Right cardiac atrium (tissue), 5 donors: ENCODE measurements at regions of chr4 and their contacts with region 1.

Region 1: DNA sequence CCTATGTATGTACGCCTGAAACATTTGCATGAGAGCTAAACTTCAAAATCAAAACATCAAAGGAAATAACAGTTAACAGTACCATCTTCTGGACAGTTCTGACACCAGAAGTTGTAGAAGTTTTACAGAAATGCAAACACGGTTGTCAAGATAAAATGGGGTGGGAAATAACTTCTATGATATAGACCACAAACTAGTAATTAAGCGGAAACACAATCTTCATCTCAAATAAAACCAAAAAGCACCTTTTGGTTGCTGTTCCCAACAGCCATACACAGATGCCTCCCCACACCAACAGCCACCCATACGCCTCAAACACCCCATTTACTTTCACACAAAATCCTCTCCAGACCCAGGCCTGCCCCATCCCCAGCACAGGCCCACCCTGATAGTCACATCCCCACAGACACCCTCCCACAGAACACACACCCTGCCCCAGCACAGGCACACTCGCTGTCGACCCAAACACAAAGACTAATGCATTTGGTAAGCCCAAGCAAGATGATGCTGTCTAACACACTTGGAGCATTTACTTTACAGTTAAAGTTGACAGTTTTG is 64.3 kb downstream of the TAPT1 start:
- DNase-seq: no peak
- ATAC-seq: no peak
- H3K4me3 ChIP-seq: no peak overlapping the region
- H3K27ac ChIP-seq: no peak overlapping the region
- H3K4me1 ChIP-seq: peaks cover 4% of the 10 kb centered on the region
- H3K27me3 ChIP-seq: no peaks in the 10 kb centered on the region

Region 2: GRCh38 chr4:15930314-15930713 is 231.6 kb before region 1 on chr4:
- intact Hi-C with region 1: no loop called
- DNase-seq: no peak
- ATAC-seq: peak in 1 of 2 donors; percentile 16
- H3K4me3 ChIP-seq: no peak overlapping the region
- H3K27ac ChIP-seq: no peak overlapping the region
- H3K4me1 ChIP-seq: no peaks in the 10 kb centered on the region
- H3K27me3 ChIP-seq: no peaks in the 10 kb centered on the region

Region 3: DNA sequence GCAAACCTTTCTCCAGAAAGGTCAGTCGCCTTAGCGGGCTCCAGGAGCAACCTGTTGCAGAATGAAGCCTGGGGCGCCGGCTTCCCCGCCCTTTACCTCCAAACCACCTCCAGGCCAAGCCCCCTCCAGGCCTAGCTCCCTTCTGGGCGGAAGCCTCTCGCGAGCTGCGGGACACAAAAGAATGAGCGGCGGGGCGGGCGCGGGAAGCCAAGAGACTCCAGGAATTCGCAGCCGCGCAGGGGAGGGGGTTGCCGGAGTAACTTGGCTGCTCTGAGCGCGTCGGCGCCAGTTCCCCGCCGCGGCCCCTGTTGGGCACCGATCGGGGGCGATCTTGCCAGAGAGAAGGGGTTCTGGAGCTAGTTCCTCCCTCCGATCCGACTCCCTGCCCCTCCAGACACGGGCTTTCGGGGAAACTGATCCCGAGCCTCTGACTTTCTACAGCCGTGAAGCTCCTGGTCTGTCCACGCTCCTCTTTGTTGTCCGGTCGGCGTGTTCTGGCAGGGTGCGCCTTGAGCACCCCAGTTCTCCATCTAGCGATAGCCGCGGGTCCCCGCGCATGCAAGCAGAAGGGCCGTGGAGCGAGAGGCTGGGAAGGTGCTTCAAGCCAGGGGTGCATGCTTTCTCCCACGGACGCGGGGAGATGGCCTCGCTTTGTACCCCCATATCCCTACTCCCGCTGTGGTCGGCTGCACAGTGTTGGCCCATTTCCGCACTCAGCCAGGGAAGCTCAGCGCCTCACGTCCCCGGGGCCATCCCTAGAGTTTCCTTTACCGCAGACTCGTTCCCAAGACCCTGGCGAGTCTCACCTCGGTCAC is 79.3 kb before region 1 on chr4:
- intact Hi-C with region 1: loop called in 1 of 4 experiments (anchors 10 kb)
- DNase-seq: peak in 2 of 3 donors; percentile 63 to 67
- ATAC-seq: peak; percentile 47 to 68
- H3K4me3 ChIP-seq: peak overlapping the region; percentile 79
- H3K27ac ChIP-seq: no peak overlapping the region
- H3K4me1 ChIP-seq: peaks cover 8% of the 10 kb centered on the region
- H3K27me3 ChIP-seq: no peaks in the 10 kb centered on the region